Activated CD4-positive, alpha-beta memory T cell treated with anti-CD3 and anti-CD28 coated beads for 36 hours (primary cell): ENCODE measurements at regions of chr3 and their contacts with region 1.

Region 1: GRCh38 chr3:152298393-152299242 is 29.9 kb downstream of the MBNL1 start:
- DNase-seq: peak; percentile 59
- H3K4me3 Mint-ChIP-seq: peak overlapping the region; percentile 75
- H3K27ac Mint-ChIP-seq: peak overlapping the region; percentile 90
- H3K4me1 Mint-ChIP-seq: peaks cover 74% of the 10 kb centered on the region
- H3K27me3 Mint-ChIP-seq: no peaks in the 10 kb centered on the region

Region 2: DNA sequence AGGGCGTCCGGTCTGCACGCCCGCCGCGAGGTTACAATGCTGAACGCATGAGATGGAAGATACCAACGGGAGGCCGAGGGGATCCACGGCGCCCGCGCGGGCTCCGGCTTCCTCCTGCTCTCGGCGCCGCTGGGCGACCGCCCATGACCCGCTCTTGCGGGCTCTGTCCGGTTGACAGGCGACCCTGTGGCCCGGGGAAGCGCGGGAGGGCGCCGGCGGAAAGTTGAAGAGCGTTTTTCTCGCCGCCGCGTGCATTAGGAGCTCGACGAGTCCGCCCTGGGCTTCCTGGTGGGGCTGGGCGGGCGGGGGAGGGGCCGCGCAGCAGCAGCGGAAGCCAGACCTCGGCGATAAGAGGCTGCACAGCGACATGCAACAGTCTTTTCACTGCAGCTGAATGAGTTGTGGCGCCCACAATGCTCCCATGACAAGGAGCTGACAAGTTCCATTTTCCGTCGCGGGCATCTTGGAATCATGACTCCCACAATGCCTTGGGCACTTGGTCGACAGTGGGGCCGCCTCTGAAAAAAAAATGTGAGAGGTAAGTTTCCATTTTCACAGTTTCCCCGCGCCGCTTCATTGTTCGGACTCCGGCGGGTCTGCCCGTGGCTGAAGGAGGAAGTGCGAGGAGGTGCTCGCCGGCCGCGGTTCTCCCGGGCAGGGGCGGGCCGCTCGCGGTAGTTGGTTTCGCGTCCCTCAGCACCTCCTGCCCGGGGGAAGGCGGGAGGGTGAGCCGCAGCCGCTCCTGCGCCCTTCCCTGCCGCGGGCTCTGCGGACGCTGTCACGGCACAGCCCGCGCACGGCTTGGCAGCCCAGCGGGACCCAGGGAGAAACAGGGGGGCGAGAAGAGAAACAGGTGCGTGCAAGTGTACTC is 29.8 kb before region 1 on chr3 and contains the start of gene MBNL1:
- CTCF ChIA-PET with region 1: interaction called, 3 read pairs
- POLR2A ChIA-PET with region 1: interaction called, 7 read pairs
- intact Hi-C with region 1: loop called (anchors 1 kb)
- DNase-seq: peak; percentile 93
- H3K4me3 Mint-ChIP-seq: peak within 1 kb of the TSS; percentile 84
- H3K27ac Mint-ChIP-seq: peak within 1 kb of the TSS; percentile 84
- H3K4me1 Mint-ChIP-seq: peaks cover 52% of the 10 kb centered on the region
- H3K27me3 Mint-ChIP-seq: no peaks in the 10 kb centered on the region
- total RNA-seq, gene MBNL1: 290 to 302 TPM

Region 3: DNA sequence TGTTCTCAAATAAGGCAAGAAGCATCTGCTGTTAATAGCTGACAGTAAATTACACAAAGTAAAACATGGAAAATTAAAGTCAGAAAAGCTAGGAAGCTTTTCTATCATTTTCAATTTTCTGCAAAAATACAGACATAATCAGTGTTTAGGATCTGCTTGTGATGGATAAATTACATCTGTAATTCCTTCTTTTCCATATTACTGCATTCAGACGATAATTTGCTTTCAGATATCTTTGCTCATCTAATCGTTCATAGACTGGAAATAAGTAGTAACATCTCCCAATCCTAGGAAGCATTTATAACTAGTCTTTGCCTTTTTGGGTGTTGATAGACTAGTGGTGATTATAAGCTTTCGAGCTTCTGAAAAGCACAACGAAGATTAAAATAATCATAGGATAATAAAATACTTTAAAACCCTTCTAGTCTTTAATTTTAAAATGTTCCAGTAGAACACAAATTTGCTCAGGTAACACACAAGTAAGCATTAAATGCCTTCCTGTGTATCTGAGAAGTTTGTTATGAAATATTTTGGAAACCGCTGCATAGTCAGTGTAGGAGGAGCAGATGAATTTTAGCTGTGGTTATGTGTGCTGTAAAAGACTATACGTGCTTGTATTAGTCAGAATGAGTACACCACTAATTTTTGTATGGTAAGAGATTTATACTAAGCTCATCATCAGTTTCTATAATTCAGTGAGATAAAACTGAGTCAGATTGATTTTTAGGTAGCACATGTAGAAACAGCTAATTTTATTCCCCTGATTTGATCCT is 11.1 kb after region 1 on chr3:
- CTCF ChIA-PET with region 1: interaction called, 3 read pairs
- POLR2A ChIA-PET with region 1: interaction called, 13 read pairs
- intact Hi-C with region 1: loop called (anchors 1 kb)
- DNase-seq: no peak
- H3K4me3 Mint-ChIP-seq: no peak overlapping the region
- H3K27ac Mint-ChIP-seq: peak overlapping the region; percentile 65
- H3K4me1 Mint-ChIP-seq: peaks cover 73% of the 10 kb centered on the region
- H3K27me3 Mint-ChIP-seq: no peaks in the 10 kb centered on the region

Region 4: DNA sequence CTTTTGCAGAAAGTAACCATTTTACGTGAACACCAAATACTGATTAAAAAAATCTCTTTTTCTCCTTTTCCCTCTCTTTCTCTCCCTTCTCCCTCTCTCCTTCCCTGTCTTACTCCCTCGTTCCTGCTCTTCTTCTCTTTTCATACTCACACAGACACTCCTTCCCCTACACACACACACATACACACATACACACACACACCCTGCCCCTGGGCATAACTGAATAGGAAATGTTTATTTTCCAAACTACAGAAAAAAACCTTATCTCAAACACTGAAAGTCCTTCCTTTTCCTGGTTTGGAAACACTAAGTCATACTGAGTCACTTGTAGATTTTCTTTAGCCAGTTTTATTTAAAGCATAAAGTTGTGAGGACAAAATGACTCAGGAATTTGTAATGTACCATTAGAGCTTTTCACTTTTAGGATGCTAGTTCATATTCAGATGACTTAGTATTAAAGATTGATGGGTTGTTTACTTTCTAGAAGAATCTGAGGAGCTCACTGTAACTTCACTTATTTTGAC is 32.5 kb after region 1 on chr3:
- CTCF ChIA-PET with region 1: no interaction called
- POLR2A ChIA-PET with region 1: no interaction called
- intact Hi-C with region 1: loop called (anchors 2 kb)
- DNase-seq: no peak
- H3K4me3 Mint-ChIP-seq: no peak overlapping the region
- H3K27ac Mint-ChIP-seq: peak overlapping the region; percentile 66
- H3K4me1 Mint-ChIP-seq: peaks cover 87% of the 10 kb centered on the region
- H3K27me3 Mint-ChIP-seq: no peaks in the 10 kb centered on the region

Region 5: DNA sequence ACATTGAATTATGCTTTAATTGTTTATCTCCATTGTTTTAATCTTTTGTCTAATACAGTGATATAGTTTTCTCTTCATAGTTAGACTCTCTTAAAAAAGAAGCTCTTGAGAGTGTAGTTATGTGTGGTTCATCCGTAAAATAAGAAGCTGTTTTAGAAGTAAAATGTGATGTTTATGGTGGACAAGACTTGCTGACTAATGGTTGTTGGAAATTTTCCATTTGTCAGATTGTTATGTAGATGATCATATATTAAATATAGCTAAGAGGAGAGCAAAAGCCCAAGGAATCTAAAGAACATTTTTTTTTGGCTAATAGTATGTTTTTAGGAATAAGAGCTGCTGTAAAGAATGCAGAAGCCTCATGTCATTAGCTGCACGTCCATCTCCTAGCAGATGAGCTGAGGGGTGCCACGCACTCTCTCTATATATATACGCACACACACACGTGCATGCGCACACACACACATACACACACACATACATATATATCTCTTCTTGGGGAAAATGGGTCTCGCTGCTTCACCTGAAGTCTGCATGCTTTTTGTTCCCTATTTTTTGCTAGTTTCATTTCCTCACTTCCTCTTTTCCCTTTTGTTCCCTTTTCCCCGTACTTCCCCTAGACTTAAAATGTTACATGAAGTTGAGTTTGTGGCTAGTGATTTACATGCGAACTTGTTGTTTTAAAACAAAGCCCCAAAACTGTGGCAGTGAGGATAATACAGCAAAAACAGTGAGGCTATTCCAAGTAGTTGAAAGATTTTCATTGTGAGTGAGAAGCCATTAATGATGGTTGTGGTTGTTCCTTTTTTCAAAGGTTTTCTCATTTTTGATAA is 77.9 kb after region 1 on chr3:
- CTCF ChIA-PET with region 1: no interaction called
- POLR2A ChIA-PET with region 1: no interaction called
- intact Hi-C with region 1: no loop called
- DNase-seq: no peak
- H3K4me3 Mint-ChIP-seq: no peak overlapping the region
- H3K27ac Mint-ChIP-seq: peak overlapping the region; percentile 69
- H3K4me1 Mint-ChIP-seq: peaks cover 77% of the 10 kb centered on the region
- H3K27me3 Mint-ChIP-seq: no peaks in the 10 kb centered on the region